ENCODE measurements at regions of chr4 and their contacts with region 1.

Region 1: DNA sequence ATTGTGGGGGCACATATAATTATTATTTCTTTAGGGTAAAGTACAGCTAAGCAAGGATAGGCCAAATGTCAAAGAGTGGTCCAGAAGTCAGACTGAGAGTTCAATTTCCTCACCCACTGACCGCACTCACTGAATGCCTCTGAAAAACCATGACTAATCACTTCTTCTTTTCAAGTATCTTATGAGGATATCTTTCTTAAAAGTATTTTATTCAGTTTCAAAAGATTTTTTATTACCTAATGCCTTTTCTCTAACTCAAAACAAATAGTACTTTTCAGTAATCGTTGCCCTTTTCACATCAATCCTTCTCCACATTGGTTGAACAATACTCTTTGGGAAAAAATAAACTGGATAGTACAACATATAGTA is 61.7 kb upstream of the CAMK2D start:
- DNase-seq: peak; percentile 21
- ATAC-seq: no peak
- H3K4me3 Mint-ChIP-seq: no peak overlapping the region
- H3K27ac Mint-ChIP-seq: peak overlapping the region; percentile 17
- H3K4me1 Mint-ChIP-seq: peaks cover 57% of the 10 kb centered on the region
- H3K27me3 Mint-ChIP-seq: no peaks in the 10 kb centered on the region
- CTCF ChIP-seq: no peak

Region 2: DNA sequence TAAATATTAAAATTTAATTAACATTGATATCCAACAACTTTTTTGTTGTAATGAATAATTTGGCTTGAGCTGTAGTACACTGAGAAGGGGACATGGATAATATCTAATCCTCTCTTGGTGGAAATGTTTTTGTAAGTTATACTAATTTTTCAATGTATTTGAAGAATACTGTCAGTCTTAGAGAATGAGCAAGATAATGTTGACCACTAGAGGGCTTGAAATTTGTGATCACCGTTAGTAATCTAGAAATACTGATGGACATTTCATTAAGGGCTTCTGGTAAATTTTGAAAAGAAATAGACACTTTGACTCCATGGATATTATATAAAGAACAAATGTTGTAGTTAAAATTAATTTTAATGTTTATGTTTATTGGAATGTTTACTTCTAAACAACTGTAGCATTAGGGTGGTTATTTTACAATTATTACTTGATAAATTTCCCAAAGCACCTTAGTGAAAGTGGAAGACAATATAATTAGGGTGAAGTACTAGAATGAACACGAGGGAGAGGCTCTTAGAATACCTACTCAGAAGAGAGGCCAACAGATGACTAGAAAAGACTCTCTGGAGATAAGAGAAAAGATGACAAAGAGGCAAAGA is 41.7 kb before region 1 on chr4:
- CTCF ChIA-PET with region 1: interaction called, 4 read pairs
- POLR2A ChIA-PET with region 1: no interaction called
- intact Hi-C with region 1: loop called (anchors 5 kb)
- DNase-seq: no peak
- ATAC-seq: peak; percentile 34
- H3K4me3 Mint-ChIP-seq: no peak overlapping the region
- H3K27ac Mint-ChIP-seq: no peak overlapping the region
- H3K4me1 Mint-ChIP-seq: peaks cover 28% of the 10 kb centered on the region
- H3K27me3 Mint-ChIP-seq: no peaks in the 10 kb centered on the region
- CTCF ChIP-seq: peak; percentile 73

Region 3: DNA sequence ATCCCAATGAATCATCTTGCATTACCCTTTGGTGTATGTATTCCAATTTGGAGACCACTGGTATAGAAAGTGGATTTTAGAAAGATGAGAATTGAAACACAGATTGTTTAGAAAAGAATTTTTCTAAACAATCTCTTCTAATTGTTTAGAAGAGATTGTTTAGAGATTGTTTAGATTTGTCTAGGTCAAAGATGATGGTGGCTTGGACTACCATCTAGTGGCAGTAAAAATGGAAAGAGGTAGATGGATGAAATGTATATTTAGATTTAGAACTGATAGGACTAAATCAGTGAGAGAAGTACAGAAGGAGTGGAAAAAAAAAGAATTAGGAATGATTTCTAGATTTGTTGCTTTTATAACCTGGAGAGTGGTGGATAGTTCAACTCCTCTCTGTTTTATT is 85.6 kb after region 1 on chr4:
- CTCF ChIA-PET with region 1: no interaction called
- POLR2A ChIA-PET with region 1: no interaction called
- intact Hi-C with region 1: loop called (anchors 5 kb)
- DNase-seq: no peak
- ATAC-seq: no peak
- H3K4me3 Mint-ChIP-seq: no peak overlapping the region
- H3K27ac Mint-ChIP-seq: no peak overlapping the region
- H3K4me1 Mint-ChIP-seq: peaks cover 22% of the 10 kb centered on the region
- H3K27me3 Mint-ChIP-seq: no peaks in the 10 kb centered on the region
- CTCF ChIP-seq: peak; percentile 38